ENCODE measurements at regions of chr6 and their contacts with region 1.

Region 1: GRCh38 chr6:27772261-27773001 is 139.8 kb downstream of the OR2B2 start:
- DNase-seq: peak; percentile 93
- ATAC-seq: peak; percentile 100
- H3K4me3 Mint-ChIP-seq: no peak overlapping the region
- H3K27ac Mint-ChIP-seq: peak overlapping the region; percentile 8
- H3K4me1 Mint-ChIP-seq: peaks cover 22% of the 10 kb centered on the region
- H3K27me3 Mint-ChIP-seq: peaks cover 20% of the 10 kb centered on the region

Region 2: GRCh38 chr6:27687154-27688013 is 85.0 kb before region 1 on chr6:
- CTCF ChIA-PET with region 1: interaction called, 15 read pairs
- POLR2A ChIA-PET with region 1: no interaction called
- DNase-seq: peak; percentile 86
- ATAC-seq: peak; percentile 80
- H3K4me3 Mint-ChIP-seq: peak overlapping the region; percentile 85
- H3K27ac Mint-ChIP-seq: peak overlapping the region; percentile 86
- H3K4me1 Mint-ChIP-seq: peaks cover 28% of the 10 kb centered on the region
- H3K27me3 Mint-ChIP-seq: peaks cover 15% of the 10 kb centered on the region

Region 3: GRCh38 chr6:27761391-27761790 is 11.0 kb before region 1 on chr6:
- CTCF ChIA-PET with region 1: interaction called, 66 read pairs
- POLR2A ChIA-PET with region 1: interaction called, 6 read pairs
- DNase-seq: no peak
- ATAC-seq: no peak
- H3K4me3 Mint-ChIP-seq: no peak overlapping the region
- H3K27ac Mint-ChIP-seq: no peak overlapping the region
- H3K4me1 Mint-ChIP-seq: peaks cover 21% of the 10 kb centered on the region
- H3K27me3 Mint-ChIP-seq: peaks cover 5% of the 10 kb centered on the region

Region 4: DNA sequence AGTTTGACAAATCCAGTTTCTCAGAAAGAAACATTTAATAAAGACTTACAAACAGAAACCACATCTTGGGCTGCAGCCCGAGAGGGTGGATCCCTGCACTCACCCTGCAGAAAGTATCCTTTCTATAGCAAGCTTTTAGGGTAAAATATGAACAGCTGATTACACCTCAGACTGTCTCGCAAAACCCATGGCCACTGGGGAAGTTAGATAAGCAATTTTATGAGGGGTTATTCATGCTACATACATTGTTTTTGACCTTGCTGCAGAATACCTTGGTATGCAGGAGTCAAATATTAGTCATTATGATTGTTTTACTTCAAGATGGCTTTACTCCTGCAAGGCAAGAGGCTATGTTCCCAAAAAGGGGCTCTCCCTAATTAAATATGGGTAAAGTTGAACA is 12.9 kb after region 1 on chr6:
- CTCF ChIA-PET with region 1: interaction called, 40 read pairs
- POLR2A ChIA-PET with region 1: interaction called, 5 read pairs
- DNase-seq: no peak
- ATAC-seq: no peak
- H3K4me3 Mint-ChIP-seq: no peak overlapping the region
- H3K27ac Mint-ChIP-seq: no peak overlapping the region
- H3K4me1 Mint-ChIP-seq: no peaks in the 10 kb centered on the region
- H3K27me3 Mint-ChIP-seq: peaks cover 31% of the 10 kb centered on the region

Measured in activated CD8-positive, alpha-beta T cell treated with anti-CD3 and anti-CD28 coated beads, Interleukin-2, amount 10 ng/mL, durations not matched to agents 7 days and 5 days (primary cell).